ENCODE measurements at regions of chr10 and their contacts with region 1.

Region 1: DNA sequence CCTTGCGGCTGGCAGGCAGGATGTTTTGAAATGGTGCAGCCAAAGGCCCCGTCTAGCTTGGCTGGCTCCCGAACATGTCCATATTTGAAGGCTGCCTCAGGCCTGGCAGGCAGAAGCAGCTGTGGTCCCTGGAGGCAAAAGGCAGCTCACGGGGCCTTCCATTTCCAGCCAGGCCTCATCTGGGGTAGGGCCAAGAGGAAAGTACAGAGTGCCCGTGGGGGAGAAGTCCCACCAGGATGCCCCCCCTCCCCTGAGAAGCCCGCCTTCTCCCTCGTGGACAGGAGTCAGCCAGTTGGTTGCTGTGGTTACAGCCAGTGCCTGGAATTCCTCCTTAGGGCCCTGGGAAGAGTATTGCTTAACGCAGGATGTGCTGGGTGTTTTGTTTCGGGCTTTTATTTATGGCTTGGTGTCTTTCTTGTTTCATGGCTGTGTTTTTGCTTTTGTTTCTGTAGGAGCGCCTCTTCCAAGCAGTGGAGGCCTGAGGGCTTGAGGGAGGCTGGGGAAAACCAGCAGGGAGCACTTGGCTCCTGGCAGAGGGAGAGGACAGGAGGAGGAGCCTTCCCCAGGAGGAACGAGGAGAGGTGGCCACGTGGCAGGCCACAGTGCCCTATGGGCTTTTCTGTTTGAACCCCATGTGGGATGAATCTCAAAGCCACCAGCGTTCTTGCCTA is 45.4 kb downstream of the CHST3 start:
- DNase-seq: peak; percentile 98
- H3K4me3 Mint-ChIP-seq: peak overlapping the region; percentile 53
- H3K27ac Mint-ChIP-seq: peak overlapping the region; percentile 98
- H3K4me1 Mint-ChIP-seq: peaks cover 28% of the 10 kb centered on the region
- H3K27me3 Mint-ChIP-seq: no peaks in the 10 kb centered on the region
- CTCF ChIP-seq: no peak

Region 2: GRCh38 chr10:71957546-71958275 is 51.8 kb before region 1 on chr10:
- CTCF ChIA-PET with region 1: interaction called, 11 read pairs
- POLR2A ChIA-PET with region 1: interaction called, 19 read pairs
- intact Hi-C with region 1: no loop called
- DNase-seq: no peak
- H3K4me3 Mint-ChIP-seq: no peak overlapping the region
- H3K27ac Mint-ChIP-seq: no peak overlapping the region
- H3K4me1 Mint-ChIP-seq: peaks cover 10% of the 10 kb centered on the region
- H3K27me3 Mint-ChIP-seq: no peaks in the 10 kb centered on the region
- CTCF ChIP-seq: no peak

Region 3: DNA sequence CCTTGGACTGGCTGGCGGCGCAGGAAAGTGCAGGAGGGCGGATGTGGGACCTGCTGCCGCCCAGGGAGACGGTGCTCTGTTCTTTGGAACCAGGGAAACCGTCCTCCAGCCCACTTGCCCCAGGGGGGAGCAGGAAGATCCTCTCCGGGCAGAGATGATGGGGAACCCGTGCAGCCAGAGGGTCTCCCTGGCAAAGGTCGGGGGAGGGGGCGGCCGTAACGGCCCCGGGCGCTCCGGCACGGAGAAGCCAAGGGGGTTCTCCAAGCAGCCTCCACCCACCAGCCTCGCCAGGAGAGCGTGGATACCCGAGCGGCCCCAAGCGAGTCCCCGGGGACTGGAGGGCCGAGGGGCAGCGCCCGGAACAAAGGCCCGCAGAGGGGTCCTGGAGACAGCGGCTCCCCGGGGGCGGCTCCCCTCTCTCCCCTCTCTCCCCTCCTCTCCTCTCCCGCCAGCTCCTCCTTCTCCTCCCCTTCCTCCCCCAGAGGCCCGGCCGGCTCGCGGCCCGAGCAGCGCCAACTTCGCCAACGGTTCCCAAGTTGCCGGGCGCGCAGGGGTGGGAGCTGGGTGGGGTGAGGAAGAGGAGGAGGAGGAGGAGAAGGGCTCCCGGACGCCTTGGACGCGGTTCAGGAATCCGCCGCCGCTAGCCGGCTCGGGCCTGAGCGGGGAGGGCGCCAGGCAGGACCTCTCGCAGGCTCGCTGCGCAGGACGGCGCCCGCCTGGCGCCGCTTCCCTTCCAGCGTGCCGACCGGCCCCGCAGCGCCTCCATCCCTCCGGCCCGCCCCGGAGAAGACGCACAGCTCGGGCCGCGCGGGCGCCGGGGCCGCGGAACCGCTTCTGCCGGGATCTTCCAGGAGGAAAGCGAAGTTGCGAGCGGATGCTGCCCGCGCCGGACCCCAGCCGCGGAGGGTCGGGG is 45.5 kb before region 1 on chr10 and contains the start of gene CHST3:
- CTCF ChIA-PET with region 1: interaction called, 3 read pairs
- POLR2A ChIA-PET with region 1: interaction called, 12 read pairs
- intact Hi-C with region 1: loop called (anchors 2 kb)
- DNase-seq: peak; percentile 55
- H3K4me3 Mint-ChIP-seq: peak within 1 kb of the TSS; percentile 83
- H3K27ac Mint-ChIP-seq: peak within 1 kb of the TSS; percentile 81
- H3K4me1 Mint-ChIP-seq: peaks cover 33% of the 10 kb centered on the region
- H3K27me3 Mint-ChIP-seq: no peaks in the 10 kb centered on the region
- CTCF ChIP-seq: no peak
- total RNA-seq, gene CHST3: 28.7 and 29.3 TPM in 2 replicates

Region 4: DNA sequence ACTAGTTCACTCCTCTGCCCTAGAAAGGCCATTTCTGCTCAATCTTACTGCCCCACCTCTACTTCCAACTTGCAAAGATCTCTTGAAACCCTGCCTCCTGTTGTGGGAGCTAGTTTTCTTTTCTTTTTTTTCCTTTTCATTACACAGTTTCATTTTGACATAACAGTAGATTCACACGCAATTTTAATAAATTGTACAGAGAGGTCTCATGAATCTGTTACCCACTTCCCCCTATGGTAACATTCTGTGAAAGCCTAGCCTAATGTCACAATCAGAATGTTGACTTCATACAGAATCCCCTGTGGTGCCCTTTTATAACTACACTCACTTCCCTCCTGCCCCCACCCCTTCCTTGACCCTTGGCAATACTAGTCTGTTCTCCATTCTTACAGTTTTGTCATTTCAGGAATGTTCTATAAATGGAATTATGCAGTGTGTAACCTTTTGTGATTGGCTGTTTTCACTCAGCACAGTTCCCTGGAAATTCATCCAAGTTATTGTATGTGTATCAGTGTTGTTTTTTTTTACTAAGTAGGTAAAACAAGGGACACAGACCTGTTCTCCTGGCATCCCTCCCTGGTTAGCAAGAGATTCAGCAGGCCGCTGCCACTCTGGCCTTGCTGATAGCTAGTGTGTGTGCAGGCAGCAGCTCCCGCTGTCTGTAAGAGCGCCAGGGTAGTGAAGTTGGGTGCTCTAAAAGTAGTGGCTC is 23.9 kb before region 1 on chr10:
- CTCF ChIA-PET with region 1: no interaction called
- POLR2A ChIA-PET with region 1: no interaction called
- intact Hi-C with region 1: no loop called
- DNase-seq: no peak
- H3K4me3 Mint-ChIP-seq: no peak overlapping the region
- H3K27ac Mint-ChIP-seq: peak overlapping the region; percentile 65
- H3K4me1 Mint-ChIP-seq: peaks cover 40% of the 10 kb centered on the region
- H3K27me3 Mint-ChIP-seq: no peaks in the 10 kb centered on the region
- CTCF ChIP-seq: no peak

Region 5: GRCh38 chr10:71999360-72000072 is 10.0 kb before region 1 on chr10:
- CTCF ChIA-PET with region 1: interaction called, 6 read pairs
- POLR2A ChIA-PET with region 1: interaction called, 24 read pairs
- intact Hi-C with region 1: no loop called
- DNase-seq: peak; percentile 35
- H3K4me3 Mint-ChIP-seq: peak overlapping the region; percentile 48
- H3K27ac Mint-ChIP-seq: peak overlapping the region; percentile 82
- H3K4me1 Mint-ChIP-seq: peaks cover 44% of the 10 kb centered on the region
- H3K27me3 Mint-ChIP-seq: no peaks in the 10 kb centered on the region
- CTCF ChIP-seq: no peak

Measured in MCF 10A (cell line).